Activated naive CD4-positive, alpha-beta T cell treated with anti-CD3 and anti-CD28 coated beads for 36 hours (primary cell): ENCODE measurements at regions of chr13 and their contacts with region 1.

Region 1: GRCh38 chr13:75694722-75695121 is 58.6 kb downstream of the LMO7 start:
- DNase-seq: no peak
- H3K4me3 Mint-ChIP-seq: no peak overlapping the region
- H3K27ac Mint-ChIP-seq: no peak overlapping the region
- H3K4me1 Mint-ChIP-seq: peaks cover 4% of the 10 kb centered on the region
- H3K27me3 Mint-ChIP-seq: no peaks in the 10 kb centered on the region

Region 2: DNA sequence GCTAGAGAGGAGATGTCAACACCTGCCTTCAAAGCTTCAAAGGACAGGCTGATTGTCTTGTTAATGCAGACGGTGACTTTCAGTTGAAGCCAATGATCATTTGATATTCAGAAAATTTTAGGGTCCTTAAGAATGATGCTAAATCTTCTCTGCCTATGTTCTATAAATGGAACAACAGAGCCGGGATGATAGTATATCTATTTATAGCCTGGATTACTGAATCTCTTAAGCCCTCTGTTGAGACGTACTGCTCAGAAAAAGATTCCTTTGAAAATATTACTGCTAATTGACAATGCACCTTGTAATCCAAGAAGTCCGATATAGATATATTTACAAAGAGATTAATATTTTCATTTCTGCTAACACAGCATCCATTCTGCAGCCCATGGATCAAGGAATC is 94.4 kb before region 1 on chr13:
- CTCF ChIA-PET with region 1: no interaction called
- intact Hi-C with region 1: no loop called
- DNase-seq: no peak
- H3K4me3 Mint-ChIP-seq: no peak overlapping the region
- H3K27ac Mint-ChIP-seq: no peak overlapping the region
- H3K4me1 Mint-ChIP-seq: no peaks in the 10 kb centered on the region
- H3K27me3 Mint-ChIP-seq: no peaks in the 10 kb centered on the region

Region 3: DNA sequence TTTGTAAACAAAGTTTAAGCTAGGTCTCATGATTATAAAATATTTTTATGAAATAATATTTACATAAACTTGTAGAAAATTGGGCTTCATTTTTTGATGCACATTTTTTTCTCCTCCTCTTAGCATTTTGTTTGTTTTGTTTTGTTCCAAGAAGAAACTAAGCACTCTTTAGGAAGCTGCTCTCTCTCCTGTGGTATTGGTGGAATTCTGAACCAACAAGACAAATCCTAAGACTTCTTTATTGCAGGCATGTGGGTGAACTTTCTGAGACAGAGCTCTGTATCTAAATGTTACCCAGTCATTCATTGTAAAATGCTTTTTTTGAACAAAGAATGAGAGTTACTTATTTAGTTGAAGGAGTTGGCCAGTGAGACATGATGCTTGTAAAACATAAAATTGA is 19.3 kb before region 1 on chr13:
- CTCF ChIA-PET with region 1: interaction called, 37 read pairs
- intact Hi-C with region 1: no loop called
- DNase-seq: no peak
- H3K4me3 Mint-ChIP-seq: no peak overlapping the region
- H3K27ac Mint-ChIP-seq: no peak overlapping the region
- H3K4me1 Mint-ChIP-seq: no peaks in the 10 kb centered on the region
- H3K27me3 Mint-ChIP-seq: no peaks in the 10 kb centered on the region

Region 4: DNA sequence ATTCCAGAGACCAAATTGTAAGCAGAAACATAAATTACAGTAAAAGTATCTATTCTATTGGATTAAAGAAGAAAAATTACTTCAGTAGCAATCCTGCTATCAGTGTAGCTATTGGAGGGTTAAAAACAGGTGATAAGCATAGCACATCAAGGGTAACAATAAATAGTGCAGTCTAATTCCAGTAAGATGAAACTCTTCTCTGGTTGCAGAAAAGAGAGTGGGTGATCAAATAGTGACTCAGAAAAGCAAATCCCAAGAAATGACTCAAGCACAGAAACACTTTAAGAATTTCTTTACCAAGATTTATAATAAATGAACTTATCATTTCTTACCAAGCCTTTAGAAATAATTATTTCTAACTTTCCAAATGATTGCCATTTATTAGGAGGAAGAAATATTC is 77.1 kb after region 1 on chr13:
- CTCF ChIA-PET with region 1: interaction called, 11 read pairs
- intact Hi-C with region 1: no loop called
- DNase-seq: no peak
- H3K4me3 Mint-ChIP-seq: no peak overlapping the region
- H3K27ac Mint-ChIP-seq: no peak overlapping the region
- H3K4me1 Mint-ChIP-seq: peaks cover 49% of the 10 kb centered on the region
- H3K27me3 Mint-ChIP-seq: no peaks in the 10 kb centered on the region

Region 5: DNA sequence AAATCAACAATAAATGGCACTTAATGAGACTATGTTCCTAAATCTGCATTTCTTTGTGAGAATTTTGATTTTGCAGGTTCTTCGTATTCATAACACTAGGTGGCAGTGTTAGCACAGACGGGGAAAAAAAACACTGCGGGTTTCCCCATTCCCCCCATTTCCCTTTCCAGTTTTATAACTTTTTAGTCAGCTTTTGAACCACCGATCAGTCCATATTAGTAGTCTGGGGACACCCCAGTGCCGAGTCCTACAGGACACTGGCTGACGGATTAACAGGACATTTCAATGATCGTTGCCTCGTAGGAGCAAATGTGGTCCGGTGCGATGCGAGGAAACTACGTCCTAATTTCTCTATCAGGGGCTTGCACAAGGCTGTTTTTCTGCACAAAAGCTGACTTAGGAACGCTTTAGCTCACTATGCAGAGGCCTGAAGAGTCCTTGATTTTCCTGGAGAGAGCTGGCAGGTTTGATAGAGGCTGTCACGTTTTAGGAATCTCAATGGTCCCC is 175.7 kb after region 1 on chr13:
- CTCF ChIA-PET with region 1: interaction called, 90 read pairs
- intact Hi-C with region 1: loop called (anchors 1 kb)
- DNase-seq: peak; percentile 15
- H3K4me3 Mint-ChIP-seq: peak overlapping the region; percentile 40
- H3K27ac Mint-ChIP-seq: no peak overlapping the region
- H3K4me1 Mint-ChIP-seq: peaks cover 16% of the 10 kb centered on the region
- H3K27me3 Mint-ChIP-seq: peaks cover 5% of the 10 kb centered on the region

Region 6: DNA sequence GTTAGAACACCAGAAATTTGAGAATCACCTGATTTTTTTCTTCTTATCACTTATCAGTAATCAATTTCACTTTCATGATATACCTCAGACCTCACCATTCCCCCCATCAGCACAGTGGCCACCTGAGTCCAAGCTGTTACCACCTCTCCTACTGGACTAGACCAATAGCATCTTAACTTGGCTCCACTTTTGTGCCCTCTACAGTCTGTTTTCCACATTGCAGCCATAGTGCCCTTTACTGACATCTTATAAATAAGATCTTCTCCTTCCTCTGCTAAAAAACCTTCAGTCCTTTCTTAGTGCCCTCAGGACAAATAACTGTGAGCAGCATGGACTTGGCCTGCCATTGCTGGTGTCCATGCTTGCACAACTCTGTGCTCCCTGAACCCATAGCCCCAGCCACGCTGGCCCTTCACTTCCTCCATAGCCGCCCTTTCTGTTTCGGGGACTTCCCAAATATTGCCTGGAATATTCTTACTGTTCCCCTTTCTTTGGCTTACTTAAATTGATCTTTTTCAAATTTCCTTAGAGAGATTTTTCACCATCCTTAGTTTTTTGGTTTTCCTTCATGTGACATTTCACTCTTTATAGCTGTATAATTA is 322.2 kb after region 1 on chr13:
- CTCF ChIA-PET with region 1: interaction called, 9 read pairs
- intact Hi-C with region 1: loop called (anchors 1 kb)
- DNase-seq: peak; percentile 52
- H3K4me3 Mint-ChIP-seq: no peak overlapping the region
- H3K27ac Mint-ChIP-seq: no peak overlapping the region
- H3K4me1 Mint-ChIP-seq: no peaks in the 10 kb centered on the region
- H3K27me3 Mint-ChIP-seq: no peaks in the 10 kb centered on the region

Region 7: GRCh38 chr13:76903544-76904162 is 1208.9 kb after region 1 on chr13:
- CTCF ChIA-PET with region 1: no interaction called
- intact Hi-C with region 1: loop called (anchors 5 kb)
- DNase-seq: peak; percentile 81
- H3K4me3 Mint-ChIP-seq: no peak overlapping the region
- H3K27ac Mint-ChIP-seq: no peak overlapping the region
- H3K4me1 Mint-ChIP-seq: no peaks in the 10 kb centered on the region
- H3K27me3 Mint-ChIP-seq: peaks cover 10% of the 10 kb centered on the region

Region 8: DNA sequence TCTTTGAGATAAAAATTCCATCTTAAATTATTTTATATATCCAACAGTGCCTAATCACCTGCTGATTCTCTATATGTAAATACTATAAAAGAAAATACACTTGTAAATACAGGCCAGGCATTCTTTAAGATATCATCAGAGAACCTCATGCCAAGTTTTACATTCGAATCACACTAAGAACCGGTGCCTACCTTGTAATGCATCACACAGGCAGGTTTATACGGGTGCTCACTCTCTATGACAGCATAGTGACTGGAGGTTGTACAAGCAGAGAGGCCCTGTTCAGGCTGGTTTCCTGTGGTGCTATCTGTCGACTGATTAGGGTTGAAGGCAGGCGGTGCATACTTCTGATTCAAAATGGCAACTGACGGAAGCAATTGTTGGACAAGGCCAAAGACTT is 1473.5 kb after region 1 on chr13:
- CTCF ChIA-PET with region 1: no interaction called
- intact Hi-C with region 1: no loop called
- DNase-seq: no peak
- H3K4me3 Mint-ChIP-seq: no peak overlapping the region
- H3K27ac Mint-ChIP-seq: no peak overlapping the region
- H3K4me1 Mint-ChIP-seq: no peaks in the 10 kb centered on the region
- H3K27me3 Mint-ChIP-seq: no peaks in the 10 kb centered on the region